WTC11 (cell line): ENCODE measurements at regions of chr1 and their contacts with region 1.

Region 1: DNA sequence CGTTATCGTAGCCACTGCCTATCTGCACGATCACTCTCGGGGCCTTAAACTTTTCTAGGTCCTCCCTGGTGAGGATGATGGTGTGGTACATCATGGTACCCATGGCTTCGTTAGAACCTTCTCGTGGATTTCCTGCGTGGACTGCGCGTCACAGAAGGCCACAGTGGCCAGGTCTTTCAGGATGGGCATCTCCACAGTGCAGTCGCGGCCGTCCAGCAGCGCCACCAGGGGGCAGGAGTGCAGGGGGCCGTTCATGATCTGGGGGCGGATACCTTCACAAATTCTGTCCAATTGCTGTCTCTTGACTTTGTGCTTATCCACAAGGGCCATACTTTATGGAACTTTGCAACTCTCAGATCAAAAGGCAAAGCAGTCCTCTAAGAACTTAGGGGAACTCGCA is 69.6 kb downstream of the WLS start:
- DNase-seq: peak; percentile 56
- ATAC-seq: peak; percentile 80
- H3K4me3 Mint-ChIP-seq: no peak overlapping the region
- H3K27ac Mint-ChIP-seq: no peak overlapping the region
- H3K4me1 Mint-ChIP-seq: peaks cover 1% of the 10 kb centered on the region
- H3K27me3 Mint-ChIP-seq: no peaks in the 10 kb centered on the region
- CTCF ChIP-seq: peak; percentile 54

Region 2: DNA sequence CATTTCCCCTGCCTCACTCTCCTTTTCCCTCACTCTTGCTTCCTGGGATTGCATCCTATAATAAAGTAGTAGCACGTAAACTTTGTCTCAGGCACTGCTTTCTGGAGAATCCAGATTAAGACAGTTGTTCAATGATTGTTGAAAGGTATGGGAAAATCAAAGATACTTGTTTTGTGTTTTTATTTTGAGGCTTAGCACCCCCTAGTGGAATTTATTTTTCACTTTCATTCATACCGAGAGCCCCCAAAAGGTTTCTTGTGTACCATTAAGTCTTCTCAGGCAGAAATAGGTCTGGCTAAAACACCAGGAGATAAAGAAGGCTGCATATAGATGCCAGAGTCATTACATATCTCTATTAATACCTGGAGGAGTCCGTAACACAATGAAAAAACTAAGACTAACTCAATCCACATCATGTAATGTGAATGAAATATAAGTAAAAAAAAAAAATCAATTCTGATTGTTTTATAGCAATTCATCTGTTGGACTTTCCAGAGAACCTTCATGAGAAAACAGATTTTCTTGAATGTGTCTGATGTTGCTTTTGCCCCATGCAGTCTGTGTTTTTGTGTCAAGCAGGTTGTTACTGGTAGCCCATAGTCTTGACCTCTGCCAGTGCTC is 183.5 kb after region 1 on chr1:
- CTCF ChIA-PET with region 1: interaction called, 10 read pairs
- POLR2A ChIA-PET with region 1: no interaction called
- DNase-seq: no peak
- ATAC-seq: no peak
- H3K4me3 Mint-ChIP-seq: no peak overlapping the region
- H3K27ac Mint-ChIP-seq: no peak overlapping the region
- H3K4me1 Mint-ChIP-seq: 0 out of 2 replicates have a peak, but pooled peaks cover 2% of the 10 kb centered on the region
- H3K27me3 Mint-ChIP-seq: no peaks in the 10 kb centered on the region
- CTCF ChIP-seq: peak; percentile 29; the same call in 1 of the 2 replicates